ENCODE measurements at regions of chr6 and their contacts with region 1.

Region 1: DNA sequence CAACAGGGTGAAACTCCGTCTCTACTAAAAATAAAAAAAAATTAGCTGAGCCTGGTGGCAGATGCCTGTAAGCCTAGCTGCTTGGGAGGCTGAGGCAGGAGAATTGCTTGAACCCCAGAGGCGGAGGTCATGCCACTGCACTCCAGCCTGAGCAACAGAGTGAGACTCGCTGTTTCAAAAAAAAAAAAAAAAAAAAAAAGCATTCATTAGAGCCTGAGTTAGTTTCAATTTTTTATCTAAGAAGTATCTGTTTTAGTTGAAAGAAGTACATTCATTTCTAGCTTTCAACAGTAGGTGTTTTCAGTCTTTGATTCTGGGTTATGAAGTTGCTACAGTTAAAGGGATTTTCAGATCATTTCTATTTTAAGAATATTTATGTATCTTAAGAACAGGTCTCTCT is 42.2 kb downstream of the ZNF292 start:
- DNase-seq: no peak
- ATAC-seq: no peak
- H3K4me3 ChIP-seq: no peak overlapping the region
- H3K4me3 Mint-ChIP-seq: no peak overlapping the region
- H3K27ac ChIP-seq: no peak overlapping the region
- H3K27ac Mint-ChIP-seq: no peak overlapping the region
- H3K4me1 ChIP-seq: peaks cover 5 to 9% of the 10 kb centered on the region in 2 experiments
- H3K4me1 Mint-ChIP-seq: peaks cover 75 to 83% (median 77%) of the 10 kb centered on the region in 3 donors
- H3K27me3 ChIP-seq: no peaks in the 10 kb centered on the region
- H3K27me3 Mint-ChIP-seq: no peaks in the 10 kb centered on the region

Region 2: DNA sequence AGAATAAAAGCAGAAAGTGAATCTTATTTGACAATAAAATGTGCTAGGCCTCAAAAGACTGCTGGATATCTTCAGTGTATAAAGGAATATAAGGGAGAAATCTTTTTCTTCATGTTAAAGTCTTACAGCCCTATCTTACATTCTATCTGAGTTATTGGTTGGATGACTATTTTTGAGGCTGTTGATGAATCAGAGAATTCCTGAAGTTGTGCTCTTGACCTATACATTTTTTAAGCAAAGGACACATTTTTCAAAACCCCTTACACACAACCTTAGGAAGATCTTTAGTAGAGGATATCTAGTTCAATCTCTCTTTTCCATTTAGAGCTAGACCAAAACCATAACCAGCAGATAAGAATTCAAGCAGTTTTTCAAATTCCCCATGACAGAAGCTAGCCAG is 91.7 kb before region 1 on chr6:
- CTCF ChIA-PET with region 1: interaction called in 1 of 2 experiments, 3 read pairs
- POLR2A ChIA-PET with region 1: interaction called in 1 of 2 experiments, 14 read pairs
- DNase-seq: no peak
- ATAC-seq: no peak
- H3K4me3 ChIP-seq: no peak overlapping the region
- H3K4me3 Mint-ChIP-seq: no peak overlapping the region
- H3K27ac ChIP-seq: no peak overlapping the region
- H3K27ac Mint-ChIP-seq: no peak overlapping the region
- H3K4me1 ChIP-seq: no peaks in the 10 kb centered on the region
- H3K4me1 Mint-ChIP-seq: no peaks in the 10 kb centered on the region
- H3K27me3 ChIP-seq: no peaks in the 10 kb centered on the region
- H3K27me3 Mint-ChIP-seq: peaks cover 7 to 14% of the 10 kb centered on the region in 2 donors

Region 3: DNA sequence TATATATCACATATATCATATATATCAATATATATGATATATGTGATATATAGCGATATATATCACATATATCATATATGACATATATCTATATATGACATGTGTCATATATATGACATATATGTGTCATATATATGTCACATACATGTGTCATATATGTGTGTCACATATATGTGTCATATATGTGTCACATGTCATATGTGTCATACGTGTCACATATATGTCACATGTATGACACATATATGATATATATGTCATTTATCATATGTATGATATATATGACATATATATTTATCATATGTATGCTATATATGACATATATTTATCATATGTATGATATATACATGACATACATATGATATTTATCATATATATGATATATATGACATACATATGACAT is 69.8 kb before region 1 on chr6:
- CTCF ChIA-PET with region 1: no interaction called
- POLR2A ChIA-PET with region 1: interaction called in 1 of 2 experiments, 18 read pairs
- DNase-seq: no peak
- ATAC-seq: no peak
- H3K4me3 ChIP-seq: no peak overlapping the region
- H3K4me3 Mint-ChIP-seq: no peak overlapping the region
- H3K27ac ChIP-seq: no peak overlapping the region
- H3K27ac Mint-ChIP-seq: no peak overlapping the region
- H3K4me1 ChIP-seq: no peaks in the 10 kb centered on the region
- H3K4me1 Mint-ChIP-seq: no peaks in the 10 kb centered on the region
- H3K27me3 ChIP-seq: peaks cover 0 to 12% of the 10 kb centered on the region in 2 experiments
- H3K27me3 Mint-ChIP-seq: peaks cover 14 to 20% of the 10 kb centered on the region in 2 donors

Region 4: GRCh38 chr6:87151781-87152525 is 45.6 kb before region 1 on chr6:
- CTCF ChIA-PET with region 1: no interaction called
- POLR2A ChIA-PET with region 1: interaction called in 1 of 2 experiments, 24 read pairs
- DNase-seq: peak; percentile 34 to 76 (median 64)
- ATAC-seq: peak; percentile 43 to 54 (median 51)
- H3K4me3 ChIP-seq: peak overlapping the region; percentile 47 to 67
- H3K4me3 Mint-ChIP-seq: peak overlapping the region; percentile 83 to 87 (median 83)
- H3K27ac ChIP-seq: peak overlapping the region; percentile 74
- H3K27ac Mint-ChIP-seq: peak overlapping the region; percentile 96 to 97
- H3K4me1 ChIP-seq: peaks cover 17 to 28% of the 10 kb centered on the region in 2 experiments
- H3K4me1 Mint-ChIP-seq: peaks cover 37 to 42% (median 37%) of the 10 kb centered on the region in 3 donors
- H3K27me3 ChIP-seq: no peaks in the 10 kb centered on the region
- H3K27me3 Mint-ChIP-seq: peaks cover 0 to under 1% of the 10 kb centered on the region in 2 donors

Region 5: GRCh38 chr6:87161299-87161698 is 36.2 kb before region 1 on chr6:
- CTCF ChIA-PET with region 1: interaction called in 1 of 2 experiments, 3 read pairs
- POLR2A ChIA-PET with region 1: interaction called in 1 of 2 experiments, 13 read pairs
- DNase-seq: no peak
- ATAC-seq: no peak
- H3K4me3 ChIP-seq: no peak overlapping the region
- H3K4me3 Mint-ChIP-seq: no peak overlapping the region
- H3K27ac ChIP-seq: no peak overlapping the region
- H3K27ac Mint-ChIP-seq: no peak overlapping the region
- H3K4me1 ChIP-seq: peaks cover 21 to 30% of the 10 kb centered on the region in 2 experiments
- H3K4me1 Mint-ChIP-seq: peaks cover 80 to 83% (median 83%) of the 10 kb centered on the region in 3 donors
- H3K27me3 ChIP-seq: no peaks in the 10 kb centered on the region
- H3K27me3 Mint-ChIP-seq: no peaks in the 10 kb centered on the region

Region 6: DNA sequence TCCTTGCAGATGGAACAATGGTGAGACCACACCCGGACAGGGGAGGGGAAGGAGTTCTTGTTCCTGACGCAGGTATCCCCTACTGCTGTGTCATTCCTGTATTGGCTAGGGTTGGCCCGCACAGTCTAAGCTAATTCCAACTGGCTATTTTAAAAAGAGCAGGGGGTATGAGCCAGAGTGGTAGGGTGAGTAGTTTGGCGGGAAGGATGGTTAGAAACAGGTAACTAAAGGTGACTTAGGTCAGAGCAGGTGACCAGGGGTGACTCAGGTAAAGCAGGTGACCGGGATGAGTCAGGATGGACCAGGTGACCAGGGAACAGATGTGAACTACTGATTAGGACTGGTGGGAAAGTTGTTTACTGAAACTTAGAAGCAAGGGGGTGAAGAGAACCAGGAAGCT is 15.8 kb after region 1 on chr6:
- CTCF ChIA-PET with region 1: interaction called in 1 of 2 experiments, 3 read pairs
- POLR2A ChIA-PET with region 1: interaction called, 4 to 19 read pairs
- DNase-seq: no peak
- ATAC-seq: no peak
- H3K4me3 ChIP-seq: no peak overlapping the region
- H3K4me3 Mint-ChIP-seq: no peak overlapping the region
- H3K27ac ChIP-seq: no peak overlapping the region
- H3K27ac Mint-ChIP-seq: peak overlapping the region; percentile 54 to 62
- H3K4me1 ChIP-seq: peaks cover 3 to 5% of the 10 kb centered on the region in 2 experiments
- H3K4me1 Mint-ChIP-seq: peaks cover 56 to 58% (median 58%) of the 10 kb centered on the region in 3 donors
- H3K27me3 ChIP-seq: no peaks in the 10 kb centered on the region
- H3K27me3 Mint-ChIP-seq: no peaks in the 10 kb centered on the region

Region 7: DNA sequence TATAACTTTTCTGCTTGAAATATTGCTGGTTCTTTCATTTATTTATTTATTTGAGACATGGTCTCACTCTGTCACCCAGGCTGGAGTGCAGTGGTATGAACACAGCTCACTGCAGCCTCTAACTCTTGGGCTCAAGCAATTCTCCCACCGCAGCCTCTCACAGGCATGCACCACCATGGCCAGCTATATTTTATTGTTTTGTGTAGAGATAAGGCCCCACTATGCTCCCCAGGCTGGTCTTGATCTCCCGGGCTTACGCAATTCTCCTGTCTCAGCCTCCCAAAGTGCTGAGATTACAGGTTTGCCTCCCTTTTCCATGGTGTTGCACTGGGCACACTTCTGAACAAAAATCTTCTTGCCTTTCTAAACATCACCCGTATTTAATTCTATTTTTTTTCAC is 1805.0 kb after region 1 on chr6:
- CTCF ChIA-PET with region 1: no interaction called
- POLR2A ChIA-PET with region 1: no interaction called
- DNase-seq: no peak
- ATAC-seq: no peak
- H3K4me3 ChIP-seq: no peak overlapping the region
- H3K4me3 Mint-ChIP-seq: no peak overlapping the region
- H3K27ac ChIP-seq: no peak overlapping the region
- H3K27ac Mint-ChIP-seq: no peak overlapping the region
- H3K4me1 ChIP-seq: no peaks in the 10 kb centered on the region
- H3K4me1 Mint-ChIP-seq: peaks cover 3% of the 10 kb centered on the region in 3 donors
- H3K27me3 ChIP-seq: no peaks in the 10 kb centered on the region
- H3K27me3 Mint-ChIP-seq: no peaks in the 10 kb centered on the region